Aorta (tissue), 5 donors: ENCODE measurements at regions of chr10 and their contacts with region 1.

Region 1: DNA sequence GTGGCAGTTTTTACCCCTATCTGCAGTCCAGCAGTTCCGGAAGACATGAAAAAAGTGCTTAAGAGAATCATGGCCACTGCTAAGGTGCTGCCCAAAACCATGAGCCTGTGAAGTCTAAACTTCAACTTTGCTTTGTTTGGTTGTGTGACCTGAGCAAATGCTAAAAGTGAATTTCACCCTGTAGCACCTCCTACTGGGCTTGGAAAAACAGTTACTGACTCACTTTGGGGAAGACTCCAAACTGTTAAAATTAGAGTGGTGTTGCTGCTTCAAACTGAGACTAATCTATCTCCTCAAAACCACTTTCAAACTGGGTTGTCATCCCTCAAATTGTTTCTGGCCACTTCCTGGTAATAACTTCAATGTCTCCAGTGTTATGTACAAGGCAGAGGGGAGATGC is 21.3 kb downstream of the MKX start:
- DNase-seq: no peak
- ATAC-seq: no peak
- H3K4me3 ChIP-seq: no peak overlapping the region
- H3K27ac ChIP-seq: peak overlapping the region; percentile 56 to 82
- H3K4me1 ChIP-seq: peaks cover 4 to 22% of the 10 kb centered on the region in 2 donors
- H3K27me3 ChIP-seq: no peaks in the 10 kb centered on the region

Region 2: GRCh38 chr10:27680006-27680557 is 44.2 kb before region 1 on chr10:
- intact Hi-C with region 1: loop called in 1 of 2 experiments (anchors 5 kb)
- DNase-seq: no peak
- ATAC-seq: peak; percentile 65
- H3K4me3 ChIP-seq: no peak overlapping the region
- H3K27ac ChIP-seq: peak overlapping the region in 1 of 2 donors; percentile 30
- H3K4me1 ChIP-seq: peaks cover 0 to 2% of the 10 kb centered on the region in 2 donors
- H3K27me3 ChIP-seq: no peaks in the 10 kb centered on the region

Region 3: GRCh38 chr10:28291881-28292297 is 567.6 kb after region 1 on chr10:
- intact Hi-C with region 1: loop called in 1 of 2 experiments (anchors 10 kb)
- DNase-seq: no peak
- ATAC-seq: peak; percentile 57
- H3K4me3 ChIP-seq: no peak overlapping the region
- H3K27ac ChIP-seq: peak overlapping the region in 1 of 2 donors; percentile 84
- H3K4me1 ChIP-seq: peaks cover 0 to 12% of the 10 kb centered on the region in 2 donors
- H3K27me3 ChIP-seq: no peaks in the 10 kb centered on the region